IMR-90 (cell line): ENCODE measurements at regions of chr2 and their contacts with region 1.

Region 1: GRCh38 chr2:73828818-73829570 is at the start of gene STAMBP:
- DNase-seq: peak; percentile 95
- ATAC-seq: peak; percentile 90
- H3K4me3 ChIP-seq: peak within 1 kb of the TSS; percentile 65
- H3K27ac ChIP-seq: peak within 1 kb of the TSS; percentile 78
- H3K4me1 ChIP-seq: peaks cover 3% of the 10 kb centered on the region; the same call in 1 of the 2 replicates
- H3K27me3 ChIP-seq: no peaks in the 10 kb centered on the region
- CTCF ChIP-seq: no peak
- POLR2A ChIP-seq: peak; percentile 74
- RAD21 ChIP-seq: no peak
- total RNA-seq, gene STAMBP: 33.9 and 38.7 TPM in 2 replicates

Region 2: DNA sequence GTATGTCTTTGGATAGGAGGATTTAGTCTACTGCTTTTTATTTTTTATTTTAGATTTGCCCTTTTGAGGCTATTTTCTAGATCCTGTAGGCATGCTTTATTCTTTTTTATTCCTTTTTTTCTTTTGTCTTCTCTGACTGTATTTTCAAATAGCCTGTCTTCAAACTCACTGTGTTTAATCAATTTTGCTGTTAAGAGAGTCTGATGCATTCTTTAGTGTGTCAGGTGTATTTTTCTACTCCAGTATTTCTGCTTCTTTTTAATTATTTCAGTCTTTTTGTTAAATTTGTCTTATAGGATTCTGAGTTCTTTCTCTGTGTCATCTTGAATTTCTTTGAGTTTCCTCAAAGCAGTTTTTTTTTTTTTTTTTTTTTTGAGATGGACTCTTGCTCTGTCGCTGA is 300.3 kb before region 1 on chr2:
- CTCF ChIA-PET with region 1: no interaction called
- POLR2A ChIA-PET with region 1: no interaction called
- dilution Hi-C with region 1: no loop called
- in situ Hi-C with region 1: no loop called
- intact Hi-C with region 1: no loop called
- DNase-seq: no peak
- ATAC-seq: no peak
- H3K4me3 ChIP-seq: no peak overlapping the region
- H3K27ac ChIP-seq: no peak overlapping the region
- H3K4me1 ChIP-seq: no peaks in the 10 kb centered on the region
- H3K27me3 ChIP-seq: no peaks in the 10 kb centered on the region
- CTCF ChIP-seq: no peak
- POLR2A ChIP-seq: no peak
- RAD21 ChIP-seq: no peak

Region 3: DNA sequence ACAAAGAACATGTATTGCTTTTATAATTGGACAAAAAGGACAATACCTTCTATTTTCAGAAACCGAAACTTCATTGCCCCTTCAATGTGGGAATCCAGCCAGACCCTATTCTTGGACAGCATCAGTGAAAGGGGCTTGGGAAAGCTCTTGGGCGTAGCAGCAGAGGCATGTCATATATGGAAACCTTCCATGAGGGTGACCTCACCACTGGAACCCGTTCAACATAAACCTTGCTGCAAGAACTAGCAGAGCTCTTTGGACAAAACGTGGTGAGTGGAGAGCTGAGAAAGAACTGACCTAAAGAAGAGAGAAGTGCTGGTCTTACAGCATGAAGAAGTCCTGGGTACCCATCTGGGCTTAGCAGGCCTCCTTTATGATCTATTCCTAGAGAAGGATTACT is 41.1 kb after region 1 on chr2:
- CTCF ChIA-PET with region 1: interaction called, 4 read pairs
- POLR2A ChIA-PET with region 1: no interaction called
- dilution Hi-C with region 1: no loop called
- in situ Hi-C with region 1: no loop called
- intact Hi-C with region 1: loop called (anchors 2 kb)
- DNase-seq: peak; percentile 98
- ATAC-seq: peak; percentile 96
- H3K4me3 ChIP-seq: no peak overlapping the region
- H3K27ac ChIP-seq: peak overlapping the region; percentile 41; the same call in 1 of the 2 replicates
- H3K4me1 ChIP-seq: peaks cover 2% of the 10 kb centered on the region; the same call in 1 of the 2 replicates
- H3K27me3 ChIP-seq: no peaks in the 10 kb centered on the region
- CTCF ChIP-seq: no peak
- POLR2A ChIP-seq: no peak
- RAD21 ChIP-seq: no peak

Region 4: DNA sequence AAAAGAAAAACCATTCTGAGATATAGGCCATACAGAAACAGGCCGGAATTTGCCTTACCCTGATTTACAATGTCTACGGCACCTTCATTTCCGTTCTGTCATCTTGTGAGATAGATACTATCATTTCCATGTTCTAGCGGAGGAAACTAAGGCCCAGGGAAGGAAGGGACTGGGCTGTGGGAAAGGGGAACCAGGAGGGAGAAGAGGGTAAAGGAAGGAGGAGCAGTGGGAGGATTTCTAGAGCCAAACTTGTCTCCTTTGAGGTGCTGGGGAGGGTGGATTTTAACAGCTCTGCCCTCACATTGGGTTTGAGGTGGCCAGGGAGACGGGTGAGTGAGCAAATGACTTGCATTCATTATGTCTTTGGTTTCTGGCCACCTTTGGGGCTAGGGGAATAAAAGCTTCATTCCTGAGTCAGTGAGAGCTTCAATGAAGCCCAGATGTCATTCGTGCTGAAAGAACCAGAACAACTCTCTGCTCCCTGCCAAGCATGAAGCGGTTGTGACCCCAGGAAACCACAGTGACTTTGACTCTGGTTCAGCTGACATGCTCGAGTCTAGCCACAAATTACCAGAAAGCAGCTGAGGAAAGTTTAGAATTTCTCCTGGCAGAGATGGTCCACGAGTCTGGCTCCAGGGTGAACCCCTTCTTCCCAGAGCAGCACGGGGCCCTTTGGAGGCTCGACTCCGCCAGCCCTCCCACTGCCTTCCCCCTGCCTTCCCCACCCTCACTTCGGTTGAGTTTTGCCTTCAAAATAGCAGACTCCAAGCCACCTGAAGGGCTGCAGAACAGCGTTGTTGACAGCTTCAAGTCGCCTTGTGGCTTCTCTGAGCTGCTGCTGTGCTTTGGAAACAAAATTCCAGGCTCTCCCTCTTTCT is 67.6 kb after region 1 on chr2:
- CTCF ChIA-PET with region 1: interaction called, 4 read pairs
- POLR2A ChIA-PET with region 1: interaction called, 20 read pairs
- dilution Hi-C with region 1: no loop called
- in situ Hi-C with region 1: no loop called
- intact Hi-C with region 1: loop called (anchors 2 kb)
- DNase-seq: peak; percentile 92
- ATAC-seq: 0 out of 2 replicates have a peak, but pooled peaks have one; percentile 1
- H3K4me3 ChIP-seq: no peak overlapping the region
- H3K27ac ChIP-seq: peak overlapping the region; percentile 35; the same call in 1 of the 2 replicates
- H3K4me1 ChIP-seq: peaks cover 26% of the 10 kb centered on the region
- H3K27me3 ChIP-seq: no peaks in the 10 kb centered on the region
- CTCF ChIP-seq: no peak
- POLR2A ChIP-seq: no peak
- RAD21 ChIP-seq: no peak

Region 5: GRCh38 chr2:73985308-73986084 is 156.5 kb after region 1 on chr2:
- CTCF ChIA-PET with region 1: no interaction called
- POLR2A ChIA-PET with region 1: no interaction called
- dilution Hi-C with region 1: no loop called
- in situ Hi-C with region 1: loop called (anchors 10 kb)
- intact Hi-C with region 1: no loop called
- DNase-seq: no peak
- ATAC-seq: peak; percentile 48
- H3K4me3 ChIP-seq: peak overlapping the region; percentile 47
- H3K27ac ChIP-seq: peak overlapping the region; percentile 18
- H3K4me1 ChIP-seq: peaks cover 24% of the 10 kb centered on the region
- H3K27me3 ChIP-seq: no peaks in the 10 kb centered on the region
- CTCF ChIP-seq: no peak
- POLR2A ChIP-seq: no peak
- RAD21 ChIP-seq: no peak

Region 6: DNA sequence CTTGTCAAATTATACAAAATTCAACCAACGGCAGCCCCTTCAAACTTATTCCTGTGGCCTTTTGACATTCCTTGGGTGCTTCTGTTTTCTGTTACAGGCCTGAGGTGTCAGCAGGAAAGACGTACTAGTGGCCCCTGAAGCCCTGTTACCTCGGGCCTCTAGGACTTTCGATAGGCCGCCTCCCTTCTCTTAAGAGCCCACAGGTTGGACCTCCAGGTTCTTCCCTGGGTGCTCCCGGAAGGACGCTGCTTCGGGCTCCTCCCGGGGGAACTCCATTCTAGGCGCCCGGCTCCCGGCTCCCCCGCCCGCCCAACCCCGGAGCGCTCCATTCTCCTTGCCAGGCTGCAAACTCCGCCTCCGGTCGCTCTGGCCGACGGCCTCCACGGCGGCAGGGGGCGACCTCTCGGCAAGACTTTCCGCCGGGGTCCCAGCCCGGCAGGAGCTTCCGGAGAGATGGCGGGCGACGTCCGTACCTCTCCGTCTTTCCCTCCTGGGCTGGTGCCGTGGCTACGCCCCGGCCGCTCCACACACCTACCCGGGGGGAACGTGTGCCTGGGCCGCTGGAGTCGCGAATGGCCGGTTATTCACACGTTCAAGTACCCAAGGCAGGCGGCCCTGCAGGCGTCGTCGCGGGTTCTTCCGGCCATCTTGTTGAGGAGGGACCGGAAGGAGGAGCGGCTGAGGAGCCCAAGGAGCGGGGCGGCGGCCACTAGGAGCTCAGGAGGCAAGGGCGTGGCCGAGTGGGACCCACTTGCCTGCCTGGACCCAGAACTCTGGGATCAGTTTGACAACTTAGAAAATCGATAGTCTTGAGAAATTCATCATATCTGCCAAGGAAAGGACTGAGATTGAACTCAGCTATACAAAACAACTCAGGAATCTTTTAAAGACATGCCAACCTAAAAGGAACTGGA is 291.2 kb after region 1 on chr2:
- CTCF ChIA-PET with region 1: interaction called, 4 read pairs
- POLR2A ChIA-PET with region 1: no interaction called
- dilution Hi-C with region 1: loop called (anchors 25 kb)
- in situ Hi-C with region 1: loop called (anchors 25 kb)
- intact Hi-C with region 1: no loop called
- DNase-seq: peak; percentile 69
- ATAC-seq: peak; percentile 98
- H3K4me3 ChIP-seq: peak overlapping the region; percentile 62
- H3K27ac ChIP-seq: peak overlapping the region; percentile 81
- H3K4me1 ChIP-seq: no peaks in the 10 kb centered on the region
- H3K27me3 ChIP-seq: no peaks in the 10 kb centered on the region
- CTCF ChIP-seq: peak; percentile 50
- POLR2A ChIP-seq: peak; percentile 52; the same call in 1 of the 2 replicates
- RAD21 ChIP-seq: no peak

Region 7: GRCh38 chr2:74147727-74148456 is 318.9 kb after region 1 on chr2 and contains the start of gene BOLA3:
- CTCF ChIA-PET with region 1: interaction called, 7 read pairs
- POLR2A ChIA-PET with region 1: no interaction called
- dilution Hi-C with region 1: no loop called
- in situ Hi-C with region 1: loop called (anchors 25 kb)
- intact Hi-C with region 1: loop called (anchors 1 kb)
- DNase-seq: peak; percentile 55
- ATAC-seq: peak; percentile 97
- H3K4me3 ChIP-seq: peak within 1 kb of the TSS; percentile 68
- H3K27ac ChIP-seq: peak within 1 kb of the TSS; percentile 54
- H3K4me1 ChIP-seq: peaks cover 11% of the 10 kb centered on the region
- H3K27me3 ChIP-seq: no peaks in the 10 kb centered on the region
- CTCF ChIP-seq: peak; percentile 69
- POLR2A ChIP-seq: peak; percentile 4
- RAD21 ChIP-seq: peak; percentile 58
- total RNA-seq, gene BOLA3: 13.3 and 36.4 TPM in 2 replicates

Region 8: GRCh38 chr2:74334931-74335333 is 505.9 kb after region 1 on chr2:
- CTCF ChIA-PET with region 1: interaction called, 9 read pairs
- POLR2A ChIA-PET with region 1: no interaction called
- dilution Hi-C with region 1: no loop called
- in situ Hi-C with region 1: loop called (anchors 25 kb)
- intact Hi-C with region 1: loop called (anchors 1 kb)
- DNase-seq: peak; percentile 72
- ATAC-seq: peak; percentile 97
- H3K4me3 ChIP-seq: no peak overlapping the region
- H3K27ac ChIP-seq: no peak overlapping the region
- H3K4me1 ChIP-seq: no peaks in the 10 kb centered on the region
- H3K27me3 ChIP-seq: peaks cover 12% of the 10 kb centered on the region
- CTCF ChIP-seq: peak; percentile 86
- POLR2A ChIP-seq: no peak
- RAD21 ChIP-seq: peak; percentile 74

Region 9: GRCh38 chr2:75403991-75404428 is 1575.0 kb after region 1 on chr2:
- CTCF ChIA-PET with region 1: no interaction called
- POLR2A ChIA-PET with region 1: no interaction called
- dilution Hi-C with region 1: no loop called
- in situ Hi-C with region 1: no loop called
- intact Hi-C with region 1: no loop called
- DNase-seq: peak; percentile 59
- ATAC-seq: peak; percentile 94
- H3K4me3 ChIP-seq: no peak overlapping the region
- H3K27ac ChIP-seq: no peak overlapping the region
- H3K4me1 ChIP-seq: no peaks in the 10 kb centered on the region
- H3K27me3 ChIP-seq: peaks cover 14% of the 10 kb centered on the region
- CTCF ChIP-seq: peak; percentile 85
- POLR2A ChIP-seq: no peak
- RAD21 ChIP-seq: peak; percentile 93